Sciatic nerve (tissue), 2 donors: ENCODE measurements at regions of chr5 and their contacts with region 1.

Region 1: DNA sequence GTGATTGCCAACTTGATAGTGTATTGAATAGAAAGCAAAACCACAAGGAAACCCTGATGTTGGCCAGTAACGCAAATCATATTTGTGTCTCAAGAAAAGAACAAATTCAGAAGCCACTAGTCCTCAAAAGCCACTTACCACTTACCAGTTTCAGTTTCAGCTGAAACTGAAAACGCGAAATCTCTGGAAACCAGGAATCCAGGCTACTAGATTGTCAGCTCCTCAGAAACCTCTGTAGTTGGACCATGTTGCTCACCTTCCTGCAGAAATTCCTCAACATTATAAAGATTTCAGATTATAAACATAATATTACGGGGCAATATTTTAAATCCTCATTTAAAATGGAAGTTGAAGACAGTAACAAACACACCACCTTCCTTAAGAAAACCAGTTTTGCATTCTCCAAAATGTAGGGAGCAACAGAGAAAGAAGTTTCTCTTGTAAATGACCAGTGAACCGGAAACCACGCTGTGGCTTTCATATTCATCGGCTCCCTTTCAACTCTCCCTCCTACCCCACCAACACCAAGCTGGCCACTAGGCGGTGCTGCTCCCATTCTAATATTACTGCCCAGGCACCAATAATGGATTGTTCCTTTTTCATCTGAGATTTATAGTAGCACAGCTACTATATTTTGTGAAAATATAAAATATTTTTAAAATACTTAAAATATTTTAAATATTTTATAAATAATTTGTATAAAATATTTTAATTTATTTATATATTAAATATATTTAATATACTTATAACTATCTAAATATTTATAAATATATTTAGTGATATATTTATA is 8.7 kb upstream of the TMED7 start:
- DNase-seq: peak; percentile 97
- ATAC-seq: peak; percentile 98

Region 2: GRCh38 chr5:115586601-115587048 is 47.9 kb before region 1 on chr5:
- intact Hi-C with region 1: no loop called
- DNase-seq: no peak
- ATAC-seq: no peak

Region 3: DNA sequence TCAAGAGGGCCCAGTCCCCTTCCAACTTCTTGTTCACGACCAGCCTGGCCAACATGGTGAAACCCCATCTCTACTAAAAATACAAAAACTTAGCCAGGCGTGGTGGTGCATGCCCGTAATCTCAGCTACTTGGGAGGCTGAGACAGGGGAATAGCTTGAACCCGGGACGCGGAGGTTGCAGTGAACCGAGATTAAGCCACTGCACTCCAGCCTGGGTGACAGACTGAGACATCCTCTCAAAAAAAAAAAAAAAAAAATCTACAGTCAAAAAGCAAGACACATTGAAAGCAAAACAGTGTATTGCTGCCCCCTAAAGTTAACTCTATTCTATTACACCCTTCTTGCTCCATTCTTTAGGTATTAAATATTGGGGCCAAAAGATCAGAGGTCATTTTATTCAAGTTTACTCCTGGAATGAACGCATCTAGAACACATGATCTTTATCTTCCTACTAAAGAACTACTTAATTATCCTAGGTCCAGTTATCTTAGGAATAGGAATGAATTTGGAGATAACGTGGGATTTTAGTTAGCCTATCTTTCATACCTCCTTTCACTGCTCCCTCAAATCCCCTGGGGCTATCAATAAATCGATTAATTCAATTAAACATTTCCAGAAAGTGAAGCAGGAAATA is 204.5 kb after region 1 on chr5:
- intact Hi-C with region 1: loop called (anchors 5 kb)
- DNase-seq: no peak
- ATAC-seq: no peak